Activated T-helper 1 cell treated with anti-CD3 and anti-CD28 coated beads, Interleukin-12 subunit alpha, Interleukin-12 subunit beta, Interleukin-2, Interleukin-4 antibody, amounts not matched to agents 30 ng/mL and 10 ng/mL and 1 ng/mL, durations not matched to agents 14 hours and 24 hours and 36 hours (primary cell): ENCODE measurements at regions of chr10 and their contacts with region 1.

Region 1: DNA sequence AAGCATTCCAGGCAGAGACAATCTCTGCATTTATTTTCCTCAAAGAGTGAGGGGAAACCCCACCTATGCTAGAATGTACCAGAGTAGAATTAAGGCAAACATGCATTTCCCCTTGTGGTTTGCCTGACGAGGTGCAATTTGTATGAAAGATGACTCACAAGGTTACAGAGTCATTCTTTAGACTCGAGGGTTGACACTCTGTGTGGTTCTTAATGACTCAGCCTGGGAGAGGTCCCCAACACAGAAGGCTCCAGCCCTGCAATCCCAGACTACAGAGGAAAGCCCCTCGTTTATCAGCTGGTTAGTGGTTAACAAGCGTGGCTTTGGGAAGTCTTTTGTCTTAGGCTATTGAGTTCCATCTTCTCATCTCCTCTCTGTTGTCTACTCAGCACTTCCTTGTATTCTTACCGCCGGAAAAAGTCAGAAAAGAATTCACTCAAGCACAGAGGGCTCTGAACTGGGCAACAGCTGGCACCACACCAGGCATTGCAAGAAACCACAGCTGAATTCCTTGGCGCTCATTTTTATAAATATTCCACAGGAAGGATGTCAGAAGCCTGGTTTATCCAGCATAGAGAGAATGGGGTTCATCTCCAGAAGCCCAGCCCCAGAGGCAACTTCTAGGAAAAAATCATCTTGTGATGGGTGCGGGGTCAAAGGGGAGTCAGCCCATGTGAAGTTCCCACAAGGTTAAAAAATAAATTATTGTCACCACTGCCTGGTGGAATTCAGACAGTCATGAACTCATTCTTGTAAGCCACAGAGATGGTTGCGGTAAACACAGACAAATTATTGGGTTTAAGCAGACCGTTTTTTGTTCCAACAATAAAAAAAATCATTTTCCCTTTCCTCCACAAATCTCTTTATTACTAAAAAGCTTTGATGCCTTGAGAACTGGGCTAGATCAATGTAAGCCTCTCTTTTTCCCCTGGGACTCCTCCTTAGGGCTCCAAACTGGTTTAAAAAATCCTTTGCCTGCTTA is 24.5 kb upstream of the SVIL start:
- DNase-seq: peak; percentile 73
- H3K4me3 Mint-ChIP-seq: peak overlapping the region; percentile 2
- H3K27ac Mint-ChIP-seq: peak overlapping the region; percentile 37
- H3K4me1 Mint-ChIP-seq: peaks cover 26% of the 10 kb centered on the region
- H3K27me3 Mint-ChIP-seq: peaks cover 48% of the 10 kb centered on the region

Region 2: GRCh38 chr10:29482591-29483431 is 176.5 kb before region 1 on chr10:
- intact Hi-C with region 1: loop called (anchors 1 kb)
- DNase-seq: no peak
- H3K4me3 Mint-ChIP-seq: peak overlapping the region; percentile 4
- H3K27ac Mint-ChIP-seq: peak overlapping the region; percentile 73
- H3K4me1 Mint-ChIP-seq: peaks cover 45% of the 10 kb centered on the region
- H3K27me3 Mint-ChIP-seq: no peaks in the 10 kb centered on the region

Region 3: GRCh38 chr10:29689001-29689400 is 29.7 kb after region 1 on chr10:
- intact Hi-C with region 1: loop called (anchors 1 kb)
- DNase-seq: no peak
- H3K4me3 Mint-ChIP-seq: no peak overlapping the region
- H3K27ac Mint-ChIP-seq: no peak overlapping the region
- H3K4me1 Mint-ChIP-seq: peaks cover 12% of the 10 kb centered on the region
- H3K27me3 Mint-ChIP-seq: peaks cover 5% of the 10 kb centered on the region

Region 4: DNA sequence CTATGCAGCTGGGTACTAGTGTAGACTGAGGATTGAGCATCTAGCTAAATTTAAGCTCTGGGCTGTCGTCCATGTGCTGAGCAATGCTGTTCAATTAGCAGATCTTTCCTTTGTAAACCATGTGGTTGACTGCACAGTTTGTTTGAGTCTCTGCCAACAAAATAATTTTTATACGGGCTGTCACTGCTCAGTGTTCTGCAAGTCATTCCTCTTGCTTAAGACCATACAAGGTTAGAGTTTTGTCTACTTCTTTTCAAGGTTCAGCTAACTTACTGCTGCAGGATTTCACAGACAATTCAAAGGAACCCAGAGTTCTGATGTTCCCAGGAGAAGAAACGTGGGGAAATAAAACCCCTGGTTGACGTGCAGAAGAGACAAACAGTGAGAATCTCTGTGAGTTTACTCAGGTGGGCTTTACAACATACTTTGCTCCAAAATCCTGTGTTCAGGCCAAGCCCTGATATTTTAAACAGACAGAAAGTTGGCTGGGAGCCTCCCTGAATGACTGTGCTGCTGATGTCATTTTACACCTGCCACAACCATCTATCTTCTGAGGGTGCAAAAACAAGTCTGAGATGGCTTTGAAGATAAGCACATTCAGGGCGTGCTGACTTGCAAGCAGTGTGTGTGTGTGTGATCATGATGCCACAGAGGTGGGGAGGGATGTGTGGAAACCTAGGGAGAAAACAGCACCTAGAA is 152.6 kb after region 1 on chr10:
- intact Hi-C with region 1: loop called (anchors 1 kb)
- DNase-seq: peak; percentile 49
- H3K4me3 Mint-ChIP-seq: peak overlapping the region; percentile 34
- H3K27ac Mint-ChIP-seq: peak overlapping the region; percentile 36
- H3K4me1 Mint-ChIP-seq: peaks cover 32% of the 10 kb centered on the region
- H3K27me3 Mint-ChIP-seq: peaks cover 20% of the 10 kb centered on the region